B cell (primary cell): ENCODE measurements at regions of chr2 and their contacts with region 1.

Region 1: DNA sequence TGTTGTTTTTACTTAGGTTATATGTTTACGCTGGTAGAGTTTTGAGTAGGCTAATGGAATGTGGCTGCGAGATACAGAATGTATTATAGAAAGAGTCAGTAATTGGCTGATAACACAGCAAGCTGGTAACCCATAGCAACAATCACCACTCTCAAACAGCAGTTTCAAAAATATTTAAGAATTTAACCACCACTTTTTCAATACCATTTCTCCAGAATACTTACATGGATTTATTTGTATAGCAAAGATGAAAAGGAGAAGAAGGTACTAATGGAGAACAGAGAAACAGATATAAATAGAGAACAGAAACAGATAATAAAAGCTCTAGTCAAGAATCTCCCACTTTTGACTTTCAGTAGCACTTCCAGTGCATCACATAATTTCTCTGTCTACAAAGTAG is 188.3 kb upstream of the SLC39A10 start:
- DNase-seq: peak; percentile 20
- ATAC-seq: no peak
- H3K4me3 ChIP-seq: no peak overlapping the region
- H3K4me3 Mint-ChIP-seq: no peak overlapping the region
- H3K27ac ChIP-seq: no peak overlapping the region
- H3K27ac Mint-ChIP-seq: no peak overlapping the region
- H3K4me1 ChIP-seq: peaks cover 35 to 36% of the 10 kb centered on the region in 2 donors
- H3K4me1 Mint-ChIP-seq: peaks cover 5% of the 10 kb centered on the region
- H3K27me3 ChIP-seq: no peaks in the 10 kb centered on the region
- H3K27me3 Mint-ChIP-seq: no peaks in the 10 kb centered on the region
- CTCF ChIP-seq: no peak

Region 2: DNA sequence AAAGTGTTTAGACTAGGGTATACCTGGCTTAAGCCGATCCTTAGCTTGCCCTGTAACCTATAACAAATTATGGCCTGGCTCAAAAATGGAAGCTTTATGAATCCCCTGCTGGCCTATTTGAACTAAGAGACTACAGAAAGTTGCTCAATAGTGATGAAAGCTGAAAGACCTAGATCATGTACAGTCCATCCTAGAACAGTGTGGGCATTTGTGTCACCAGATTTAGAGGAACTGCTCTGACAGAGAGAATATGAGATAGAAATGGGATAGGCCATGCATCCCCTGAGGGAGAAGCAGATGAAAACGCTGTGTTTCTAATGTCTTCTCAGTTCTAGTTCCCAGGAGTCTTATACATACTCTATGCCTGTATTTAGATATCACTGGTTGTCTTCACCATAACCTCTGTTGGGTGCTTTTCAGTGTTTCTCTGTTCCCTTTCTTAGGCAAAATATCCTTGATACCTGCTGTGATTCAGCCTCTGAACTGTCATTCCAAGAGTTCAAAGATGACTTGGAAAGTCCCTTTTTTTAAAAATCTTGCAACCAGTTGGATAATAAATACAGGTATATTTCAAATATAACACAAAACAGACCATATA is 58.6 kb before region 1 on chr2:
- CTCF ChIA-PET with region 1: no interaction called
- POLR2A ChIA-PET with region 1: no interaction called
- intact Hi-C with region 1: loop called (anchors 5 kb)
- DNase-seq: no peak
- ATAC-seq: no peak
- H3K4me3 ChIP-seq: no peak overlapping the region
- H3K4me3 Mint-ChIP-seq: no peak overlapping the region
- H3K27ac ChIP-seq: no peak overlapping the region
- H3K27ac Mint-ChIP-seq: no peak overlapping the region
- H3K4me1 ChIP-seq: peaks cover 12 to 13% of the 10 kb centered on the region in 2 donors
- H3K4me1 Mint-ChIP-seq: peaks cover 16% of the 10 kb centered on the region
- H3K27me3 ChIP-seq: no peaks in the 10 kb centered on the region
- H3K27me3 Mint-ChIP-seq: no peaks in the 10 kb centered on the region
- CTCF ChIP-seq: no peak

Region 3: DNA sequence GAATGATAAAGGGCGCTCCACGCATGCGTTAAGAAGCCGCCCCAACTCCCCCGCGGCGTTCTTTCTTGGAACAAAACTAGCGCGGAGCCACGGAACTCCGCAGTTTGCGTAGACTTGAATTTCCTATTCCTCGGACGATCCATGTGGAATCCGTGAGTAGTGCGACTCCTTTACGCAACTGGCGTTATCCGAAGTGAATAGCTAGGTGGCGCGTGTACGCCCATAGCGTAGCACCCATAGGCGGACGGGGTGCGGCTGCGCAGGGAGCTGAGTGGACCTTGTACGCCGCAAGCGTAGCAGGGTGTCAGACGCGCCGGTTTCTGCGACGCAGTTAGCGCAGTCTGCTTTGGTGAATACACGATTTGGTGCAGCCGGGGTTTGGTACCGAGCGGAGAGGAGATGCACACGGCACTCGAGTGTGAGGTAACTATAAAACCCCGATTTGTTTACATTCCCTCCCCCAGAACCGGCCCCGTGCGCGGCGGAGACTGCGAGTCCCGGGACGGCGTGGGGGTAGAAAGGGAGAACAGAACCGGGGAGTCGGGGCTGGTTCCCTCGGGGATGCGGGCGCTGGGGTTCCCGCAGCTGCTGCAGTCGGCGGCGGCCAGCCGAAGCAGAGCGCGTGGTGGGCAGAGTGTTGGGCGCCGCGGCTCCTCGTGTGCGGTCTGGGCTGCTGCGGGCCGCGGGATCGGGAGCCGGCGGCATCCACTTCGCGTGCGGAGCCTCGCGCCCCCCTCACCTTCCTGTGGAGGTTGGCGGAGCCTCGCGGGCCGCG is 188.3 kb after region 1 on chr2 and contains the start of gene SLC39A10:
- CTCF ChIA-PET with region 1: no interaction called
- POLR2A ChIA-PET with region 1: no interaction called
- intact Hi-C with region 1: no loop called
- DNase-seq: peak; percentile 100
- ATAC-seq: peak; percentile 86
- H3K4me3 ChIP-seq: peak within 1 kb of the TSS; percentile 87 to 96 (median 93)
- H3K4me3 Mint-ChIP-seq: peak within 1 kb of the TSS; percentile 100
- H3K27ac ChIP-seq: peak within 1 kb of the TSS; percentile 98 to 99
- H3K27ac Mint-ChIP-seq: peak within 1 kb of the TSS; percentile 99
- H3K4me1 ChIP-seq: peaks cover 30 to 39% of the 10 kb centered on the region in 2 donors
- H3K4me1 Mint-ChIP-seq: peaks cover 55% of the 10 kb centered on the region
- H3K27me3 ChIP-seq: no peaks in the 10 kb centered on the region
- H3K27me3 Mint-ChIP-seq: no peaks in the 10 kb centered on the region
- CTCF ChIP-seq: no peak
- total RNA-seq, gene SLC39A10: 99.3 and 99.8 TPM in 2 replicates

Region 4: GRCh38 chr2:196677406-196677805 is 1208.6 kb after region 1 on chr2:
- CTCF ChIA-PET with region 1: no interaction called
- POLR2A ChIA-PET with region 1: no interaction called
- intact Hi-C with region 1: no loop called
- DNase-seq: no peak
- ATAC-seq: no peak
- H3K4me3 ChIP-seq: no peak overlapping the region
- H3K4me3 Mint-ChIP-seq: no peak overlapping the region
- H3K27ac ChIP-seq: no peak overlapping the region
- H3K27ac Mint-ChIP-seq: no peak overlapping the region
- H3K4me1 ChIP-seq: no peaks in the 10 kb centered on the region
- H3K4me1 Mint-ChIP-seq: no peaks in the 10 kb centered on the region
- H3K27me3 ChIP-seq: no peaks in the 10 kb centered on the region
- H3K27me3 Mint-ChIP-seq: no peaks in the 10 kb centered on the region
- CTCF ChIP-seq: no peak